Naive thymus-derived CD8-positive, alpha-beta T cell (primary cell): ENCODE measurements at regions of chr3 and their contacts with region 1.

Region 1: GRCh38 chr3:56682462-56683121 is 473 bp downstream of the TASOR start:
- DNase-seq: peak; percentile 64 to 89 (median 73)
- ATAC-seq: peak; percentile 75 to 76
- H3K4me3 Mint-ChIP-seq: peak overlapping the region; percentile 87 to 98 (median 94)
- H3K27ac Mint-ChIP-seq: peak overlapping the region; percentile 87 to 99 (median 97)
- H3K4me1 Mint-ChIP-seq: peaks cover 12 to 46% (median 32%) of the 10 kb centered on the region in 4 donors
- H3K27me3 Mint-ChIP-seq: no peaks in the 10 kb centered on the region

Region 2: GRCh38 chr3:56556908-56557830 is 125.4 kb before region 1 on chr3 and contains the start of gene CCDC66:
- POLR2A ChIA-PET with region 1: interaction called, 46 read pairs
- DNase-seq: peak; percentile 88 to 97 (median 94)
- ATAC-seq: peak; percentile 91 to 94
- H3K4me3 Mint-ChIP-seq: peak within 1 kb of the TSS; percentile 91 to 100 (median 97)
- H3K27ac Mint-ChIP-seq: peak within 1 kb of the TSS; percentile 95 to 100 (median 99)
- H3K4me1 Mint-ChIP-seq: peaks cover 19 to 38% (median 28%) of the 10 kb centered on the region in 4 donors
- H3K27me3 Mint-ChIP-seq: peaks cover 0 to 3% (median 0%) of the 10 kb centered on the region in 5 donors
- polyA plus RNA-seq, gene CCDC66: 16.8 to 28.9 (median 20.9) TPM

Region 3: GRCh38 chr3:56593455-56594158 is 89.0 kb before region 1 on chr3:
- POLR2A ChIA-PET with region 1: interaction called, 10 read pairs
- DNase-seq: peak in 9 of 10 donors; percentile 24 to 82 (median 62)
- ATAC-seq: peak; percentile 98 to 100
- H3K4me3 Mint-ChIP-seq: peak overlapping the region; percentile 46 to 84 (median 66)
- H3K27ac Mint-ChIP-seq: peak overlapping the region; percentile 89 to 98 (median 96)
- H3K4me1 Mint-ChIP-seq: peaks cover 34 to 78% (median 73%) of the 10 kb centered on the region in 4 donors
- H3K27me3 Mint-ChIP-seq: no peaks in the 10 kb centered on the region

Region 4: GRCh38 chr3:56610669-56611335 is 71.8 kb before region 1 on chr3:
- POLR2A ChIA-PET with region 1: no interaction called
- DNase-seq: no peak
- ATAC-seq: no peak
- H3K4me3 Mint-ChIP-seq: peak overlapping the region in 8 of 10 donors; percentile 11 to 57 (median 32)
- H3K27ac Mint-ChIP-seq: peak overlapping the region in 9 of 10 donors; percentile 12 to 86 (median 57)
- H3K4me1 Mint-ChIP-seq: peaks cover 40 to 73% (median 70%) of the 10 kb centered on the region in 4 donors
- H3K27me3 Mint-ChIP-seq: no peaks in the 10 kb centered on the region

Region 5: GRCh38 chr3:56693750-56694149 is 11.2 kb after region 1 on chr3:
- POLR2A ChIA-PET with region 1: interaction called, 48 read pairs
- DNase-seq: no peak
- ATAC-seq: no peak
- H3K4me3 Mint-ChIP-seq: peak overlapping the region in 9 of 10 donors; percentile 39 to 90 (median 84)
- H3K27ac Mint-ChIP-seq: peak overlapping the region; percentile 56 to 94 (median 86)
- H3K4me1 Mint-ChIP-seq: peaks cover 26 to 47% (median 46%) of the 10 kb centered on the region in 4 donors
- H3K27me3 Mint-ChIP-seq: no peaks in the 10 kb centered on the region

Region 6: GRCh38 chr3:56702490-56703315 is 20.1 kb after region 1 on chr3:
- POLR2A ChIA-PET with region 1: interaction called, 19 read pairs
- DNase-seq: peak in 9 of 10 donors; percentile 34 to 75 (median 57)
- ATAC-seq: peak; percentile 76 to 79
- H3K4me3 Mint-ChIP-seq: no peak overlapping the region
- H3K27ac Mint-ChIP-seq: peak overlapping the region in 5 of 10 donors; percentile 8 to 46 (median 20)
- H3K4me1 Mint-ChIP-seq: peaks cover 18 to 31% (median 27%) of the 10 kb centered on the region in 4 donors
- H3K27me3 Mint-ChIP-seq: no peaks in the 10 kb centered on the region

Region 7: DNA sequence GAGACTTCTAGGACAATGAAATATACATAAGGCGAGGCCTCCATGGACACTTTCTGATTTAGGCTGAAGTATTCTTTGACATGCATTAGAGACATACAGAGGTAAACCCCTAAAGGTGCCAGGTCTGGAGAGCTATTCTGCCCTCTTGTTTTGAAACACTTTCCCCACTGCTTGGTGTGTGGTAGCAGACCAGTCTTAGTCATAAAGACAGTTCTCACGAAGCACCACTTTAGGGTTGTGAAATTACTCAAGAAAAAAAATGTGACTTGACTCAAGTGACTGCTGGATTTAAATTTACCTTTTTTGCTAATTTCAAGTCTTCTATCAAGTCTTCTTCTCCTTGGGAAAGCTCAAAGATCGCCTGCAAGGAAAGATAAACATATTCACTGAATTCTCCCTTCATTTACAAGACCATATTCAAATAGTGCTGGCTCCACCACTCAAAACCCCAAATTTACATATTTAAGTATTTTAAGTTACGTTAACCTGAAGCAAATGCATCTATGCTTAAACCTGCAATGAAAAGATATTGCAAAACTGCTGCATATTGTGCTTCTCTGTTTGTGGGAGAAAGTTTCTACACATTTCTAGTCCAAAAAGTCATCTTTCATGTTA is 70.7 kb after region 1 on chr3:
- POLR2A ChIA-PET with region 1: interaction called, 12 read pairs
- DNase-seq: peak in 1 of 10 donors; percentile 15
- ATAC-seq: peak in 1 of 2 donors; percentile 67
- H3K4me3 Mint-ChIP-seq: peak overlapping the region in 9 of 10 donors; percentile 8 to 96 (median 88)
- H3K27ac Mint-ChIP-seq: peak overlapping the region; percentile 78 to 99 (median 97)
- H3K4me1 Mint-ChIP-seq: peaks cover 32 to 82% (median 69%) of the 10 kb centered on the region in 4 donors
- H3K27me3 Mint-ChIP-seq: no peaks in the 10 kb centered on the region